Activated CD4-positive, alpha-beta memory T cell treated with anti-CD3 and anti-CD28 coated beads for 36 hours (primary cell): ENCODE measurements at regions of chr6 and their contacts with region 1.

Region 1: GRCh38 chr6:105981002-105981887 is 104.9 kb upstream of the PRDM1 start:
- DNase-seq: peak; percentile 60
- H3K4me3 Mint-ChIP-seq: peak overlapping the region; percentile 78
- H3K27ac Mint-ChIP-seq: peak overlapping the region; percentile 93
- H3K4me1 Mint-ChIP-seq: peaks cover 53% of the 10 kb centered on the region
- H3K27me3 Mint-ChIP-seq: peaks cover 32% of the 10 kb centered on the region

Region 2: DNA sequence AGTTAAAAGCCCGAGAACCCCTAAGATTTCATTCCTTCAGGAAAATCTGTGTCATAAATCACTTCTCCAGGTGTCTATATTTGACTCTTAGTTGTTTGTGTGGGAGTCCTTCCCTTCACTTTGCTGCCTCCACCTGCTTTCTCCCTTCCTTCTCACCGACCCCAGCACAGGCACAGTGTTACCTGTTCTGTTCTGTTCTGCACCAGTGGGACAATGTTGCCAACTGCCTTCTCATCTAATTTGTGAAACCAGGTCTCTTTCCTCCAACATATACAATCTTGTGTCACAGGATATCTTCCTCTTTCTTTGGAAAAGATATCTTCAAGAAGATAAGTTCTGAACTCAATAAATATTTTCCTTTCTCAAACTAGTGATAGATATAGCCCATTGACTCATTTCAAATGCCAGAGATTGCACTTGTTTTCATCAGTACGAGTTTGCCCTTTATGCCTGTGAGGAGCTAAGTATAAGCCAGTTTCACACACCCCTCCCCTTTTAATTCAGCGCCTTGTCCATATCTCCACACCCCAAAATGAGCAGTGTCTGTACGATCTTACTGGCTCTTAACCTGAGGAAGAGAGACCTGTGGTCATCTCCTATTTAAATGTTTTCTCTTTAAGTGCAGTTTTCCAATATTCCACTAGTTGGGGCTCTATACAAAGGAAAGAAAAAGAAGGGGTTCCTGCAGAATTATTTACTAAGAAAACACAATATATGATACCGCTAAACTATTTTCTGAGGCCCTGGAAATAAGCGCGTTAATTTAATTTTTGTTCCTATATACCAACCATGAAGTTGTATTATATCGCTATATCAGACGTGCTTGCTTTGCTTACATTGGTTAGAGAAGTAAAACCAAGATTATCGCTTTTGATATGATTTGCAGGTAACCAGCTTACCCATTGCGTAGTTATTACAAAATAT is 496.7 kb before region 1 on chr6:
- CTCF ChIA-PET with region 1: no interaction called
- POLR2A ChIA-PET with region 1: no interaction called
- intact Hi-C with region 1: loop called (anchors 5 kb)
- DNase-seq: no peak
- H3K4me3 Mint-ChIP-seq: peak overlapping the region; percentile 2
- H3K27ac Mint-ChIP-seq: peak overlapping the region; percentile 30
- H3K4me1 Mint-ChIP-seq: peaks cover 32% of the 10 kb centered on the region
- H3K27me3 Mint-ChIP-seq: peaks cover 7% of the 10 kb centered on the region

Region 3: DNA sequence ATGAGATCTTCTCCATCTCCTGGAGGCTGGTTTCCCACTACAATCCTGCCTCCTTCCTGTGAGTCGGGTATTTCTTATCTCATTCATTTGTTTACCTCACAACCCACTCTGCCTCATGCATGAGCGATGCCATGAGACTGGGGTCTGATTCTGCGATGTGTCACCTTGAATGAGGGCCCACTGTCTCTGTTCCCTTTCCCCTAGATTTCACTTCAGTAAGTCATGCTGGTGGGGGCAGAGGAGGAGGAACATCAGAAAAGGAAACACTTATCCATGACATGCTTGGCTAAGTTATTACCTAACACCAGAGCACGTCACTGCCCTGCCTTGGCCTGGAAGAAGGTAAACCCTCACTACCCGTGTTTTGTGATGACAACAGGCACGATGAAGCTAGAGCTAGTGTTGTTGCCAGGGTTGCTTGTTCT is 232.5 kb before region 1 on chr6:
- CTCF ChIA-PET with region 1: no interaction called
- POLR2A ChIA-PET with region 1: no interaction called
- intact Hi-C with region 1: no loop called
- DNase-seq: peak; percentile 11
- H3K4me3 Mint-ChIP-seq: no peak overlapping the region
- H3K27ac Mint-ChIP-seq: no peak overlapping the region
- H3K4me1 Mint-ChIP-seq: peaks cover 19% of the 10 kb centered on the region
- H3K27me3 Mint-ChIP-seq: peaks cover 11% of the 10 kb centered on the region

Region 4: GRCh38 chr6:105810105-105810921 is 170.9 kb before region 1 on chr6:
- CTCF ChIA-PET with region 1: interaction called, 4 read pairs
- POLR2A ChIA-PET with region 1: interaction called, 3 read pairs
- intact Hi-C with region 1: loop called (anchors 1 kb)
- DNase-seq: peak; percentile 82
- H3K4me3 Mint-ChIP-seq: no peak overlapping the region
- H3K27ac Mint-ChIP-seq: peak overlapping the region; percentile 53
- H3K4me1 Mint-ChIP-seq: peaks cover 42% of the 10 kb centered on the region
- H3K27me3 Mint-ChIP-seq: peaks cover 10% of the 10 kb centered on the region

Region 5: GRCh38 chr6:105898286-105898685 is 83.0 kb before region 1 on chr6:
- CTCF ChIA-PET with region 1: interaction called, 4 read pairs
- POLR2A ChIA-PET with region 1: interaction called, 13 read pairs
- intact Hi-C with region 1: loop called (anchors 1 kb)
- DNase-seq: peak; percentile 67
- H3K4me3 Mint-ChIP-seq: no peak overlapping the region
- H3K27ac Mint-ChIP-seq: no peak overlapping the region
- H3K4me1 Mint-ChIP-seq: peaks cover 14% of the 10 kb centered on the region
- H3K27me3 Mint-ChIP-seq: peaks cover 9% of the 10 kb centered on the region

Region 6: GRCh38 chr6:106085984-106086813 is 105.0 kb after region 1 on chr6 and contains the start of gene PRDM1:
- CTCF ChIA-PET with region 1: interaction called, 9 read pairs
- POLR2A ChIA-PET with region 1: interaction called, 15 read pairs
- intact Hi-C with region 1: loop called (anchors 2 kb)
- DNase-seq: peak; percentile 89
- H3K4me3 Mint-ChIP-seq: peak within 1 kb of the TSS; percentile 90
- H3K27ac Mint-ChIP-seq: peak within 1 kb of the TSS; percentile 94
- H3K4me1 Mint-ChIP-seq: peaks cover 73% of the 10 kb centered on the region
- H3K27me3 Mint-ChIP-seq: peaks cover 2% of the 10 kb centered on the region
- total RNA-seq, gene PRDM1: 70.9 to 78.9 TPM

Region 7: GRCh38 chr6:106181664-106182418 is 200.6 kb after region 1 on chr6:
- CTCF ChIA-PET with region 1: interaction called, 5 read pairs
- POLR2A ChIA-PET with region 1: no interaction called
- intact Hi-C with region 1: loop called (anchors 2 kb)
- DNase-seq: no peak
- H3K4me3 Mint-ChIP-seq: no peak overlapping the region
- H3K27ac Mint-ChIP-seq: peak overlapping the region; percentile 46
- H3K4me1 Mint-ChIP-seq: peaks cover 60% of the 10 kb centered on the region
- H3K27me3 Mint-ChIP-seq: no peaks in the 10 kb centered on the region